Activated CD4-positive, alpha-beta memory T cell treated with anti-CD3 and anti-CD28 coated beads for 36 hours (primary cell): ENCODE measurements at regions of chr21 and their contacts with region 1.

Region 1: GRCh38 chr21:18161841-18162240 is 82.8 kb upstream of the CHODL start:
- DNase-seq: no peak
- H3K4me3 Mint-ChIP-seq: no peak overlapping the region
- H3K27ac Mint-ChIP-seq: no peak overlapping the region
- H3K4me1 Mint-ChIP-seq: no peaks in the 10 kb centered on the region
- H3K27me3 Mint-ChIP-seq: no peaks in the 10 kb centered on the region

Region 2: GRCh38 chr21:18114810-18115209 is 47.0 kb before region 1 on chr21:
- CTCF ChIA-PET with region 1: no interaction called
- POLR2A ChIA-PET with region 1: no interaction called
- intact Hi-C with region 1: loop called (anchors 2 kb)
- DNase-seq: no peak
- H3K4me3 Mint-ChIP-seq: no peak overlapping the region
- H3K27ac Mint-ChIP-seq: no peak overlapping the region
- H3K4me1 Mint-ChIP-seq: no peaks in the 10 kb centered on the region
- H3K27me3 Mint-ChIP-seq: no peaks in the 10 kb centered on the region